ENCODE measurements at regions of chr7 and their contacts with region 1.

Region 1: GRCh38 chr7:45157653-45158401 is at the start of gene RAMP3:
- DNase-seq: peak; percentile 88
- H3K4me3 ChIP-seq: peak within 1 kb of the TSS in 1 of 2 experiments; percentile 35; a peak in 1 of 4 replicates
- H3K27ac ChIP-seq: no peak within 1 kb of the TSS
- H3K4me1 ChIP-seq: peaks cover 0 to 14% of the 10 kb centered on the region in 2 experiments; a peak in 1 of 4 replicates
- H3K27me3 ChIP-seq: peaks cover 29% of the 10 kb centered on the region
- CTCF ChIP-seq: no peak
- EP300 ChIP-seq: no peak
- RAD21 ChIP-seq: no peak
- polyA plus RNA-seq, gene RAMP3: not detected in 2 replicates

Region 2: DNA sequence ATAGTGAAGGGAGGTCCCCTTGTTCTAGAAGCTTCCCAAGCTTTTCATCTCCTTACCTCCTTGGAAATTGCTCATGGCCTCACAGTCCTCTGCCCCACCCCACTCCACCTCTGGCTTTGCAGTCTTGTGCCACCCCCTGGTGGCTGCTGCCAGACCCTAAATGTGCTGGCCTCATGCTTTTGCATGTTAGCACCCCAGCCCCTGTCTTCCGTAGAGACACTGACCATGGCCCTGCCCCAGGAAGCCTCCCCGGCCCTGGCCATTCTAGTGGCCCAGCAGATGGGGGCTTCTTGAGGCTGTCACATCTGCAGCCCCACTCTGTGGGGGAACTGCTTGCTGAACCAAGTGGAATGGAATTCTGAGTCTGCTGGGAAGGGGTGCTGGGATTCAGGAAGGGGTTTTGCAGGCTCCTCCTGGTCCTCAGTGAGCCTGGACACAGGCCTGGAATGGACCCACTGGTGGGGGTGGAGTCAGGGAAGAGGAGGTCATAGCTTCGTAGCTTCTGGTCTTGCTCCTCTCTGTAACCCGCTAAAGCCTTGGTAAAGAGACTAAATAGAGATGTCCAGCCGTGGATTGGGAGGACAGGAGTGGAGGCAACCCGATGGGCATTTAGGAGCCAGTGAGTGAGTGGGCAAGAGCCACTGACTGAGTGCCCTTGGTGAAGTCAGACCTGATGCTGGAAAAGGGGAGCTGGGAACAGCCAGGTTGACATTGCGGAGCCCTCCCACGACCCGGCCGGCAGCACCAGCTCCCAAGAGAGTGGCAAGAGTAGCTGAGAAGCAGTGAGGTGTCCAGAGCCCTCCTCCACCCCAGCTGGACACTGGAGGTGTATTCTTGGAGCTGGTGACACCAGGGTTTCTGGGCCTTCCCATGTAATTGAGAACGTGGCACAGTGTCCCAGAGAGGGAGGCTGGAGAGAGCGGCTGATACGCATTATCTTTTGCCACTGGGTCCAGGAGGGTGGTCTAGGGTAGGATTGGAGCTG is 20.7 kb after region 1 on chr7:
- CTCF ChIA-PET with region 1: interaction called, 19 read pairs
- POLR2A ChIA-PET with region 1: no interaction called
- DNase-seq: peak; percentile 65
- H3K4me3 ChIP-seq: no peak overlapping the region
- H3K27ac ChIP-seq: no peak overlapping the region
- H3K4me1 ChIP-seq: no peaks in the 10 kb centered on the region
- H3K27me3 ChIP-seq: peaks cover 45% of the 10 kb centered on the region; the same call in 1 of the 2 replicates
- CTCF ChIP-seq: peak; percentile 28; the same call in 1 of the 2 replicates
- EP300 ChIP-seq: no peak
- RAD21 ChIP-seq: peak; percentile 57

Region 3: GRCh38 chr7:45267266-45267665 is 109.4 kb after region 1 on chr7:
- CTCF ChIA-PET with region 1: interaction called, 17 read pairs
- POLR2A ChIA-PET with region 1: no interaction called
- DNase-seq: no peak
- H3K4me3 ChIP-seq: no peak overlapping the region
- H3K27ac ChIP-seq: no peak overlapping the region
- H3K4me1 ChIP-seq: peaks cover 0 to 7% of the 10 kb centered on the region in 2 experiments; a peak in 1 of 4 replicates
- H3K27me3 ChIP-seq: 0 out of 2 replicates have a peak, but pooled peaks cover 5% of the 10 kb centered on the region
- CTCF ChIP-seq: no peak
- EP300 ChIP-seq: no peak
- RAD21 ChIP-seq: no peak

Measured in SK-N-SH (cell line).